ENCODE measurements at regions of chr18 and their contacts with region 1.

Region 1: DNA sequence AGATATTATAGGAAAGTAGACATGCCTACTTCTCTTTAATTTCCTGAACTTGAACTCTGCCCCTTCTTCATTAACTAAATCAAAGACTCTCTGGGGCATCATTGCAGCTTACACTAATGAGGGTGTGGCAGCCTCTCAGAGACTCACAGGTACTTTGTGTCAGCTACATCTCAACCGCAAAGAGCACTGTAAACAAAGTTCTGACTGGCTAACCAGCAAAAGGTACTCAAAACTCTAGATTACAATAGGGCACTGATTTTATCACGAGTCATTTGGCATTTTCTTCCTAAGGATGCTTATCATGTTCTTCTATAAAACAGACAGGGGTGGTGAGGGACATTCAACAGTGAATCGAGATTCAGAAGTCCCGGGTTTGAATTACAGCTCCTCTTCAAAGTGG is 2.3 kb downstream of the DSG4 start:
- DNase-seq: no peak
- ATAC-seq: no peak
- H3K4me3 ChIP-seq: no peak overlapping the region
- H3K4me3 Mint-ChIP-seq: no peak overlapping the region
- H3K27ac ChIP-seq: no peak overlapping the region
- H3K27ac Mint-ChIP-seq: no peak overlapping the region
- H3K4me1 ChIP-seq: no peaks in the 10 kb centered on the region
- H3K4me1 Mint-ChIP-seq: no peaks in the 10 kb centered on the region
- H3K27me3 ChIP-seq: no peaks in the 10 kb centered on the region
- H3K27me3 Mint-ChIP-seq: no peaks in the 10 kb centered on the region
- CTCF ChIP-seq: no peak

Region 2: GRCh38 chr18:31261792-31262582 is 116.8 kb before region 1 on chr18:
- CTCF ChIA-PET with region 1: no interaction called
- POLR2A ChIA-PET with region 1: no interaction called
- intact Hi-C with region 1: no loop called
- DNase-seq: no peak
- ATAC-seq: no peak
- H3K4me3 ChIP-seq: no peak overlapping the region
- H3K4me3 Mint-ChIP-seq: no peak overlapping the region
- H3K27ac ChIP-seq: no peak overlapping the region
- H3K27ac Mint-ChIP-seq: no peak overlapping the region
- H3K4me1 ChIP-seq: no peaks in the 10 kb centered on the region
- H3K4me1 Mint-ChIP-seq: no peaks in the 10 kb centered on the region
- H3K27me3 ChIP-seq: no peaks in the 10 kb centered on the region
- H3K27me3 Mint-ChIP-seq: no peaks in the 10 kb centered on the region
- CTCF ChIP-seq: no peak

Region 3: GRCh38 chr18:31343454-31343853 is 35.4 kb before region 1 on chr18:
- CTCF ChIA-PET with region 1: no interaction called
- POLR2A ChIA-PET with region 1: no interaction called
- intact Hi-C with region 1: loop called in 1 of 2 experiments (anchors 5 kb)
- DNase-seq: no peak
- ATAC-seq: no peak
- H3K4me3 ChIP-seq: no peak overlapping the region
- H3K4me3 Mint-ChIP-seq: no peak overlapping the region
- H3K27ac ChIP-seq: no peak overlapping the region
- H3K27ac Mint-ChIP-seq: no peak overlapping the region
- H3K4me1 ChIP-seq: no peaks in the 10 kb centered on the region
- H3K4me1 Mint-ChIP-seq: no peaks in the 10 kb centered on the region
- H3K27me3 ChIP-seq: no peaks in the 10 kb centered on the region
- H3K27me3 Mint-ChIP-seq: no peaks in the 10 kb centered on the region
- CTCF ChIP-seq: no peak